Activated B cell treated with CpG ODN at 0.5 μM for 24 hours (primary cell): ENCODE measurements at regions of chr3 and their contacts with region 1.

Region 1: GRCh38 chr3:52983336-52983807 is 62.5 kb downstream of the SFMBT1 start:
- DNase-seq: no peak
- ATAC-seq: peak; percentile 85
- H3K4me3 Mint-ChIP-seq: peak overlapping the region; percentile 36
- H3K27ac Mint-ChIP-seq: peak overlapping the region; percentile 86
- H3K4me1 Mint-ChIP-seq: peaks cover 47% of the 10 kb centered on the region
- H3K27me3 Mint-ChIP-seq: no peaks in the 10 kb centered on the region
- CTCF ChIP-seq: no peak

Region 2: DNA sequence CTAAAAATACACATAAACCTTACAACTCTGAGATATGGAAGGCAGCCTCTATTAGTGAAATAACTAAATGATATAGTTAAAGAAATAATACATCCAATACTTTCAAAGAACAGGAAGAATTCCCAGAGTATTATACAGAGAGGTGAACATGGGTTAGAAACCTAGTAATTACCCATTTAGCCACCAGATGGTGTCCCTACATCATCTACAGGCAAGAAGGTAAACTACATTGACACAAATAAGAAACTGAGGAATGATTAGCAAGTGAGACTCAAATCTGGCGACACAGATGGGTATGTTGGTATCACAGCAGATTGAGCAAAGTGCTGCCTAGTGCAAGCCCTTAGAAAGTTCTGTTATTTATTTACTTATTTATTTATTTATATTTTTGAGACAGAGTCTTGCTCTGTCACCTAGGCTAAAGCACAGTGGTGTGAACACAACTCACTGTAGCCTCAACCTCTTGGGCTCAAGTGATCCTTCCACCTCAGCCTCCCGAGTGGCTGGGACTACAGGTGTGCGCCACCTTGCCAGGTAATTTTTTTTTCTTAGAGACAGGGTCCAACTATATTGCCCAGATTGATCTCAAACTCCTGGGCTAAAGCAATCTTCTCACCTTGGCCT is 240.8 kb before region 1 on chr3:
- CTCF ChIA-PET with region 1: no interaction called
- POLR2A ChIA-PET with region 1: no interaction called
- intact Hi-C with region 1: loop called (anchors 2 kb)
- DNase-seq: no peak
- ATAC-seq: peak; percentile 45
- H3K4me3 Mint-ChIP-seq: no peak overlapping the region
- H3K27ac Mint-ChIP-seq: no peak overlapping the region
- H3K4me1 Mint-ChIP-seq: no peaks in the 10 kb centered on the region
- H3K27me3 Mint-ChIP-seq: no peaks in the 10 kb centered on the region
- CTCF ChIP-seq: peak; percentile 43

Region 3: GRCh38 chr3:52845691-52846431 is 137.5 kb before region 1 on chr3:
- CTCF ChIA-PET with region 1: interaction called, 4 read pairs
- POLR2A ChIA-PET with region 1: no interaction called
- intact Hi-C with region 1: loop called (anchors 5 kb)
- DNase-seq: no peak
- ATAC-seq: peak; percentile 57
- H3K4me3 Mint-ChIP-seq: no peak overlapping the region
- H3K27ac Mint-ChIP-seq: no peak overlapping the region
- H3K4me1 Mint-ChIP-seq: no peaks in the 10 kb centered on the region
- H3K27me3 Mint-ChIP-seq: no peaks in the 10 kb centered on the region
- CTCF ChIP-seq: no peak

Region 4: GRCh38 chr3:52934630-52935530 is 48.5 kb before region 1 on chr3:
- CTCF ChIA-PET with region 1: interaction called, 9 read pairs
- POLR2A ChIA-PET with region 1: interaction called, 6 read pairs
- intact Hi-C with region 1: loop called (anchors 2 kb)
- DNase-seq: no peak
- ATAC-seq: peak; percentile 87
- H3K4me3 Mint-ChIP-seq: no peak overlapping the region
- H3K27ac Mint-ChIP-seq: peak overlapping the region; percentile 22
- H3K4me1 Mint-ChIP-seq: peaks cover 25% of the 10 kb centered on the region
- H3K27me3 Mint-ChIP-seq: no peaks in the 10 kb centered on the region
- CTCF ChIP-seq: peak; percentile 58

Region 5: DNA sequence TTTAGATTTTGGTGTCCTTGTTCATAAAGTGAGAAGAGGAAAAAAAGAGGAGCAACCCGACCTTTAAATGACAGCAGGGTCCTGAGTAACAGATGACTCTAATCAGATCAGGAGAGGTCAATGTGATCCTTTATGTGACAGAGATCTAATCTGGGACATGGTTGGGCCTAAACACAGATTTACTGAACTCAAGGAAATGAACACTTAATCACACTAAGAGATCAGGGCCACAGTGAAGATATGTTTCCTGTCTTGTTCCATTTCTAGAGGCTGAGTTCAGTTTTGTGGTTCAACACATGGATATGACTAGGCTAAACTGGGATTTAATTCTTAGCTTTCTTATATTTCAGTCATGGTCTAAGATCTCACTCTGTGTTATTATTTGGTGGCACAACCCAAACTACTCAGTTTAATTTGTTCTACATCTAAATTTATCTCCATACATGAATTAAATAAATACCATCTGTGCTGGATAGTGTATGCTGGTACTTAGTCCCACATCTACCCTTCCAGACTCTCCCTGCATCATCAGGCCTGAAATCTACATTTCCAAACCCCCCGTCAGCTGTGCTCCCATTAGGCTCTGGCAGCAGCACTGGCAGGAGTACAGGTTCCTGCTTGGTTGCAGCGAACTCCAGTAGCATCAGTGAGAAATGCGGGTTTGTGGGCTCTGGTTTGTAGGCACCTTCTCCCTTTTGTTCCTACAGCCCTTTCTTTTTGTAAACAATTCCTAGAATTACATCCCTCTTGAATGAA is 39.9 kb after region 1 on chr3:
- CTCF ChIA-PET with region 1: no interaction called
- POLR2A ChIA-PET with region 1: no interaction called
- intact Hi-C with region 1: loop called (anchors 1 kb)
- DNase-seq: no peak
- ATAC-seq: no peak
- H3K4me3 Mint-ChIP-seq: no peak overlapping the region
- H3K27ac Mint-ChIP-seq: no peak overlapping the region
- H3K4me1 Mint-ChIP-seq: peaks cover 52% of the 10 kb centered on the region
- H3K27me3 Mint-ChIP-seq: no peaks in the 10 kb centered on the region
- CTCF ChIP-seq: no peak